Activated CD8-positive, alpha-beta T cell treated with anti-CD3 and anti-CD28 coated beads, Interleukin-2, amount 10 ng/mL, durations not matched to agents 7 days and 5 days (primary cell): ENCODE measurements at regions of chr1 and their contacts with region 1.

Region 1: GRCh38 chr1:35451125-35451528 is 106.1 kb downstream of the KIAA0319L start:
- DNase-seq: peak; percentile 84
- ATAC-seq: peak; percentile 95
- H3K4me3 Mint-ChIP-seq: no peak overlapping the region
- H3K27ac Mint-ChIP-seq: no peak overlapping the region
- H3K4me1 Mint-ChIP-seq: peaks cover 23% of the 10 kb centered on the region
- H3K27me3 Mint-ChIP-seq: no peaks in the 10 kb centered on the region

Region 2: GRCh38 chr1:35499652-35500176 is 48.6 kb after region 1 on chr1:
- CTCF ChIA-PET with region 1: interaction called, 47 read pairs
- POLR2A ChIA-PET with region 1: interaction called, 3 read pairs
- DNase-seq: peak; percentile 74
- ATAC-seq: peak; percentile 90
- H3K4me3 Mint-ChIP-seq: no peak overlapping the region
- H3K27ac Mint-ChIP-seq: peak overlapping the region; percentile 4
- H3K4me1 Mint-ChIP-seq: peaks cover 38% of the 10 kb centered on the region
- H3K27me3 Mint-ChIP-seq: no peaks in the 10 kb centered on the region

Region 3: GRCh38 chr1:35511305-35511704 is 60.2 kb after region 1 on chr1:
- CTCF ChIA-PET with region 1: interaction called, 47 read pairs
- POLR2A ChIA-PET with region 1: interaction called, 10 read pairs
- DNase-seq: no peak
- ATAC-seq: no peak
- H3K4me3 Mint-ChIP-seq: no peak overlapping the region
- H3K27ac Mint-ChIP-seq: no peak overlapping the region
- H3K4me1 Mint-ChIP-seq: peaks cover 29% of the 10 kb centered on the region
- H3K27me3 Mint-ChIP-seq: no peaks in the 10 kb centered on the region

Region 4: GRCh38 chr1:35544978-35545377 is 93.9 kb after region 1 on chr1:
- CTCF ChIA-PET with region 1: interaction called, 215 read pairs
- POLR2A ChIA-PET with region 1: interaction called, 4 read pairs
- DNase-seq: peak; percentile 70
- ATAC-seq: peak; percentile 89
- H3K4me3 Mint-ChIP-seq: no peak overlapping the region
- H3K27ac Mint-ChIP-seq: no peak overlapping the region
- H3K4me1 Mint-ChIP-seq: peaks cover 28% of the 10 kb centered on the region
- H3K27me3 Mint-ChIP-seq: no peaks in the 10 kb centered on the region

Region 5: DNA sequence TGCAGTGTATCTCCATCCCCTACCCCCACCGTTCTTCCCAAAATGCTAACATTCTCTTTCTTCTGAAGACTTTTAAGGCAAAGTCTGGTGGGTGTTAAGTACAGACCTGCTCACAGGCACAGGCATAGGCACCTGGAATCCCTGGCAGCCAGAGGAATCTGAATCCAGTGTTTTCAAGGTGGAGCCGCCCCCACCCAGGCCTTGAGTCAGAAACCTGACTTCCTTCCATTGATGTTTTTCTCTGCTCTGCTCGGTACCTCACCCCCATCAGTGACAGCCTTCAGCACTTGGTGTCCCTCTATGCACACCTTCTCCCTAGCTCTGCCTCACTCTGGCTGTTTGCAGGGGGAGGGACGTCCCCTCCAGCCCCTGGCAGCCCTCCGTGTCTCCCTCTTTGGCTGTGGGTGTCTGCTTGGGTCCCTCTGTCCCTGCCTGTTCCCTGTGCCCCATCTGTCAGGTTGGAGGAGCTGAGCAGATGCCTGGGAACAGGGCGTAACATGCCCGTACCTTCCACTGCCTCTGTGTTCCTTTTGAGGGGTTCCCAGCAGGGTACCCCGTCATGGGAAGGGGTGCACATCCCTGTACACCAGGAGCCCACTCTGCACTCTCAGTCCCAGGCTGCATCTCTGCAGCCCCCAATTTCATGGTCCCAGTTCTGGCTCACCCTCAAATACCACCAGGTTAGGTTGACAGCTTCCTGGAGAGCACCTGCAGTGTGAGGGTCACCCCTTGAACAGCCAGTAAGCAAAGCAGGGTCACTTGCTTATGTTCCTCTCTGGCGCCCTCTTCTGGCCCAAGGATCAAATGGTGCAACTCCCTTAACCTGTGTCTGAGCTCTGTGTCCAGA is 113.1 kb after region 1 on chr1:
- CTCF ChIA-PET with region 1: interaction called, 192 read pairs
- POLR2A ChIA-PET with region 1: interaction called, 7 read pairs
- DNase-seq: peak; percentile 90
- ATAC-seq: peak; percentile 76
- H3K4me3 Mint-ChIP-seq: no peak overlapping the region
- H3K27ac Mint-ChIP-seq: peak overlapping the region; percentile 30
- H3K4me1 Mint-ChIP-seq: peaks cover 26% of the 10 kb centered on the region
- H3K27me3 Mint-ChIP-seq: no peaks in the 10 kb centered on the region